Posterior vena cava (tissue), 2 donors: ENCODE measurements at regions of chr3 and their contacts with region 1.

Region 1: GRCh38 chr3:190120269-190121060 is at the start of gene P3H2:
- DNase-seq: peak; percentile 90
- total RNA-seq, gene P3H2: 9.7 to 20.5 TPM

Region 2: DNA sequence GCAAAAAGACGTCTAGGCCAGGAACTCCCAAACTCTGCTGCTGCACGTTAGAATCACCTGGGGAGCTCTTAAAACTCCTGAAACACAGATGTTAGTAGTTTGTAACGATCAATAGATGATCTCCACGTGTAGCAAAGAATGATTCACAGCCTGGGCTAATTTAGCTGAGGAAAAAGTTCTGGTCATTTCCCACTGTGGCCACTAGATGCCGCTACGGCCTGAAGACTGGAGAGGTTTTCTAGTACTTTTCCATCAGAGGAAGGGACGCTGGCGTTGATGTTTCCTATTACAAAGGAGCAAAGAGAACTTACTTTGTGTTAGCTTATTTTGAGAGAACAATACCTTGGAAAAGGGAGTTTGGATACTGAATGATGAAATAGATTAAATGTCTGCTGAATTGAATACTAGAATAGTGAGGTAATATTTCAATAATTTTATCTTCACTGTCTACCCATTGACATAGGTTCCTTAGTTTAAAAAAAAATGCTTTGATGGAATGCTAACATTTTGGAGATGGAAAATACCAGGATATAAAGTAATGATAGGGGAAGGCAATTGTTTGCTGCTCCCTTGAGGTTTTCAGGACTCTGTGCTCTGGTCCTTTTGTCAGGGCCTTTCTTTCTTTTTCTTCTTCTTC is 158.8 kb before region 1 on chr3:
- intact Hi-C with region 1: loop called in 1 of 2 experiments (anchors 10 kb)
- DNase-seq: peak; percentile 84

Region 3: DNA sequence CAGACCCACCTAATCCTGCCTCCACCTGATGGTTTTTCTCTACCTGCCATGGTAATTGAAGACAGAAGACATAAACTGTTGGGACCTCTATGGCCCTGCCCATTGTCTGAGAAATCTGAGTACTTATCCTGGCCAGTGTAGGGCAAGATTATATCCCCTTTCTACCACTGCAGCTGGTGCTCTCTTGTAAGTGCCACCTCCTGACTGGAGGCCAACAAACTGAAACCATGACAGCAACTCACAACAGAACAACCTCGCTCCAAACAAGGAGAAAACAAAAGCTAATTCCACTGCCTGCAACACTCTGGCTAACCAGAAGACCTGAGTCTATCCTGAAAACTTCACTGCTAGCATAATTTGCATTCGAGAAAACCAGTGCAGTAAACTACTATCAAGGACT is 118.9 kb after region 1 on chr3:
- intact Hi-C with region 1: no loop called
- DNase-seq: no peak

Region 4: GRCh38 chr3:190926619-190927018 is 806.2 kb after region 1 on chr3:
- intact Hi-C with region 1: no loop called
- DNase-seq: no peak